ENCODE measurements at regions of chr1 and their contacts with region 1.

Region 1: GRCh38 chr1:28602536-28603439 is 10.7 kb downstream of the RAB42 start:
- DNase-seq: peak; percentile 51
- H3K4me3 ChIP-seq: no peak overlapping the region
- H3K27ac ChIP-seq: no peak overlapping the region
- H3K4me1 ChIP-seq: no peaks in the 10 kb centered on the region
- H3K27me3 ChIP-seq: no peaks in the 10 kb centered on the region
- CTCF ChIP-seq: peak in 3 of 4 experiments; percentile 59 to 77 (median 69)
- POLR2A ChIP-seq: no peak

Region 2: GRCh38 chr1:28259307-28260167 is 343.3 kb before region 1 on chr1 and contains the start of gene SESN2:
- intact Hi-C with region 1: loop called (anchors 10 kb)
- DNase-seq: peak; percentile 99
- H3K4me3 ChIP-seq: peak within 1 kb of the TSS; percentile 73 to 98
- H3K27ac ChIP-seq: peak within 1 kb of the TSS; percentile 83 to 88
- H3K4me1 ChIP-seq: no peaks in the 10 kb centered on the region
- H3K27me3 ChIP-seq: no peaks in the 10 kb centered on the region
- CTCF ChIP-seq: peak in 1 of 4 experiments; percentile 16
- POLR2A ChIP-seq: peak; percentile 99
- total RNA-seq, gene SESN2: 11.2 to 27.5 TPM

Region 3: GRCh38 chr1:28359592-28360239 is 243.1 kb before region 1 on chr1:
- intact Hi-C with region 1: loop called (anchors 10 kb)
- DNase-seq: peak; percentile 76
- H3K4me3 ChIP-seq: no peak overlapping the region
- H3K27ac ChIP-seq: no peak overlapping the region
- H3K4me1 ChIP-seq: no peaks in the 10 kb centered on the region
- H3K27me3 ChIP-seq: no peaks in the 10 kb centered on the region
- CTCF ChIP-seq: peak; percentile 20 to 62 (median 60)
- POLR2A ChIP-seq: no peak

Region 4: GRCh38 chr1:28409090-28409489 is 193.7 kb before region 1 on chr1:
- intact Hi-C with region 1: loop called (anchors 5 kb)
- DNase-seq: no peak
- H3K4me3 ChIP-seq: no peak overlapping the region
- H3K27ac ChIP-seq: no peak overlapping the region
- H3K4me1 ChIP-seq: no peaks in the 10 kb centered on the region
- H3K27me3 ChIP-seq: no peaks in the 10 kb centered on the region
- CTCF ChIP-seq: no peak
- POLR2A ChIP-seq: no peak

Region 5: GRCh38 chr1:28518000-28518744 is 84.6 kb before region 1 on chr1:
- intact Hi-C with region 1: loop called (anchors 2 kb)
- DNase-seq: peak; percentile 88
- H3K4me3 ChIP-seq: peak overlapping the region; percentile 59 to 65
- H3K27ac ChIP-seq: peak overlapping the region; percentile 72 to 83
- H3K4me1 ChIP-seq: no peaks in the 10 kb centered on the region
- H3K27me3 ChIP-seq: no peaks in the 10 kb centered on the region
- CTCF ChIP-seq: peak; percentile 97 to 99 (median 98)
- POLR2A ChIP-seq: peak; percentile 67